Left colon (tissue), 2 donors: ENCODE measurements at regions of chr6 and their contacts with region 1.

Region 1: DNA sequence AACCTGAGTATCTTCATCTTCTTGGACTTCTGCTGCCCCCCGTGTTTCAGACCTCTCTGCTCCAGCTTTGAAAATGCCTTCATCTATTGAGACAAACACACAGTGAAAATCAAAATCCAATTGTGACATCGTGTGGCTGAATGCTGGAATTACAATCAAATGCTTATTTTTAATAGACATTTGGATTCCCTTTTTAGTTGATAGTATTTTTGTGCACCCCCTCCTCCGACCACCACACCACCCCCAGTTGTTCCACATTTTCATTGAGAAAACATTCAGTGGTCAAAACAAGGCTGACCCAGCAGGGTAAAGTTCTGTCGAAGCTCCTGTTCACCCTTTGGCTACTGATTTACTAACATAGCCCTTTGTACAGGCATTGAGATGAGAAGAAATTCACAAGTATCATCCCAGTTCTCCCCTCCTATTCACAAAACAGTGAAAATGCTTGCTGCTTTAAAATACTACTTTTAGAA is 79.0 kb downstream of the NRSN1 start:
- DNase-seq: no peak
- ATAC-seq: peak; percentile 37

Region 2: GRCh38 chr6:24064082-24064481 is 141.0 kb before region 1 on chr6:
- intact Hi-C with region 1: loop called in 1 of 2 experiments (anchors 10 kb)
- DNase-seq: no peak
- ATAC-seq: no peak

Region 3: DNA sequence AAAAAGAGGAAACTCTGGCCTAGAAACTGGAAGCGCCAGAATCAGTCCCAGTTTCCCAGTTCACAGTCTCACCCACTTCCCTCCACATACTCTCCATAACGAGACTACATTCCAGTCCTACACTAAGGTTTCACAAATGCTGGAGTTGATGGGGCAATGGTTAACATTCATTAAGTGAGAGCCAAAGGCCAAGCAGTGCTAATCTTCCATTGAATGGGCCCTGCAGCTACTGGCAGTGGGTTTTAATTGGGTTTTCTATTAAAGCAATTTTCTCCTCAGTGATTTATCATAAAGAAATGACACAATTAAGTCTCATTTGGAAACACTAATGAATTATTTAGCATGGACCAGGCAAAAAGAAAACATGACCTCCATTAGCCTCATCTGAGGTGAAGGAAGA is 99.9 kb before region 1 on chr6:
- intact Hi-C with region 1: no loop called
- DNase-seq: no peak
- ATAC-seq: no peak